WTC11 (cell line): ENCODE measurements at regions of chr2 and their contacts with region 1.

Region 1: DNA sequence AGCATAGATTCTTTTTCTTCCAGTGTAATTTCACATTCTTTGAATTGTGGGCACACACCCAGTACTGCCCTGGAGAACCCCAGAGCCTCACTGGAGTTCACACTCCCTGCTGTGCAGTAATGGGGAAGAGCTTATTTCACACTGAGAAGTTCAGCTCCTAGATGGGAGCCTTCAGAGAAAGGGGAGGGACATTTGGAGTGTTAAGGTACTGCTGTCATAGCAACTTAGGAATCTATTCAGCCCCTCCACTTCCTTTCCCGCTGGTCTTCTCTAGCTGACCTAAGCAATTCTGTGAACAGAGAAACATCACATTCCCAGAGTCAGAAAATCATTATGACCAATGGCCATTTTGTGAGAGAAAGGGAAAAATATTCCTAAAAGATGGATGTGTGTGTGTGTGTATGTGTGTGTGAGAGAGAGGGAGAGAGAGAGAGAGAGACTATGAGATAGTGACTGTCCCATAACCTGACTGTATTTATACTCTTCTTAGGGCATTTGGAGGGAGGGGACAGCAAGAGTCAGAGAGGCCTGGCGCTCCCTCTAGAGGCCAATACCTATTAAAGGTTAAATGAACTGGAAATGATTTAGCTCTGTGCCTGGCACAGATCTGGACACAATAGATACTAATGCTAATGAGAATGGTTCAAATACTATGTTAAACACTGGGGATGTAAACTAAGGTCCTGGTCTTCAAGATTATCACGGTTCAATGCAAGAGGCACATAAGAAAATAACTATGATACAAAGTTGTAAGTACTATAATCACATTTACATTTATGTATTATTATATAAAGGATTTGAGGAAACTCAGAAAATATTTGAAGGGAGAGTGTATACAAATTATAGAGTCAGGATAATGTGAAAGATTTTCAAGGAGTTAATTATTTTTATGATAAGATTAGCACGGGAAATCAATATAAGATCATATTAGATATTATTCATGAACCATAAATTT is 41.5 kb upstream of the RPE start:
- DNase-seq: peak; percentile 44
- ATAC-seq: peak; percentile 97
- H3K4me3 Mint-ChIP-seq: peak overlapping the region; percentile 0
- H3K27ac Mint-ChIP-seq: no peak overlapping the region
- H3K4me1 Mint-ChIP-seq: peaks cover 23% of the 10 kb centered on the region
- H3K27me3 Mint-ChIP-seq: peaks cover 75% of the 10 kb centered on the region
- CTCF ChIP-seq: peak; percentile 57

Region 2: DNA sequence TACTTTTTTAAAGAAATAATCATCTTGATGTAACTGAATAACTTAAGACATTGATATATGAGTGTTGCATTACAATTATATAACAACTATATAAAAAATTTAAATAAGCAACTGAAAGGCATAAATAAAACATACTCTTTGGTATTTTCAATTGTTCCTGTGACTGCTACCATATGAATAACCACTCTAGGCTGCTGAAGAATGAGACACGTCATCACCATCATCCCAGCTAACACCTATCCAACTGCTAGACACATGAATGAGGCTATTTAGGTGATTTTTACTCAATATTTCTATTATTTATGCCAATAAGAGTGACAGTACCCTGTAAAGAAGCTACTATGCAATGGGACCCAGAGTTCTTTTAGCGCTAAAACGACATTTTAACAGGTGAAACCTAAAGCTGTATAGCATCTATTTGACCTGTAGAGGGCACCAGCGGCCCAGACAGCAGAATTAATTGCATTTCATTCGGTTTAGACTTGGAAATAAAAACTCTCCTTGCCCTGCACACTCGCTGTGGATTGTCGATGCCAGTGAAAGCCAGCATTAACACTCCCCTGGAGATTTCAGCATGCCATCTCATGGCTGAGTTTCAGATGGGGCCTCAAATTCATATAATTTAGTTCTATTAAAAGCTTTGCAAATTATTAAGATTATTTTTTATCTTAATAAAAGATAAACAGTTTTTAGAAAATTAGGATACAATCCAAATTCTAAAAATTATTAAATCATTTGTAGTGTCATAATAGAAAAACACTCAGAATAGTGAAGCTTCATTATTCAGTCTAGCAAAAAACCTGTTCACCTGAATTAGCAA is 626.5 kb before region 1 on chr2:
- CTCF ChIA-PET with region 1: interaction called, 10 read pairs
- POLR2A ChIA-PET with region 1: no interaction called
- DNase-seq: peak; percentile 57
- ATAC-seq: peak; percentile 76
- H3K4me3 Mint-ChIP-seq: no peak overlapping the region
- H3K27ac Mint-ChIP-seq: no peak overlapping the region
- H3K4me1 Mint-ChIP-seq: peaks cover 13% of the 10 kb centered on the region
- H3K27me3 Mint-ChIP-seq: peaks cover 9% of the 10 kb centered on the region
- CTCF ChIP-seq: peak; percentile 73

Region 3: GRCh38 chr2:209451209-209451834 is 509.6 kb before region 1 on chr2:
- CTCF ChIA-PET with region 1: interaction called, 11 read pairs
- POLR2A ChIA-PET with region 1: no interaction called
- DNase-seq: peak; percentile 17
- ATAC-seq: peak; percentile 97
- H3K4me3 Mint-ChIP-seq: no peak overlapping the region
- H3K27ac Mint-ChIP-seq: peak overlapping the region; percentile 80
- H3K4me1 Mint-ChIP-seq: peaks cover 25% of the 10 kb centered on the region
- H3K27me3 Mint-ChIP-seq: peaks cover 10% of the 10 kb centered on the region
- CTCF ChIP-seq: no peak

Region 4: DNA sequence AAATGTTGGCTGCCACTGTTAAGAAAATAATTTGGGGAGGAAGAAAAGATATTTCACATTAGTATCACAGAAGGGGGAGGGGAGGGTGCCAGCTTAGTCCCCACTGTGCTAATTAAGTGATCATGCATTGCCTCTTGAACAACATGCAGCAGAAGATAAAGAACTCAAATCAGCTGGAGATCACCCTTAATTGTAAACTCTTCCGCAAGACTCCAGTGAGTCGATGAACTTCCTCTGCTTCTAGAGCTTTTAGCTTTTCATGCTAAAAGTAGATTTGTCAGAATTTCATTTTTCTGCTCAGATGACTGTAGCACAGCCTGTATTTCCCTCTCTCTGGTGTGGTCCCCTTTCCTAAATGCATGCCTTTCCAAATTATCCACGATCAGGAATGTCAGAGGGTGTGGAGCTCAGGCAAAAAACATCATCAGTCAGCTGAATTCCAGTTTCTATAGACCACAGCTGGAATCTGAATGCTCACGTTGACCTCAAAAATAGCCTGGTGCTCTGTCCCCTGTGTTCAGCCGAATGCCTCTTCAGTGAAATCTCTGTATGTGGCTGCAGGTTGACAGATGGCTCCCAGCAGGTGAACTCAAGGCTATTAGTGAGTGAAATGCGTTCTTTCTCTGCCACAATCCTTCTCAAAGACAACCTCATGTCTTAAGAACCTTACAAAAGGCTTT is 346.1 kb before region 1 on chr2:
- CTCF ChIA-PET with region 1: interaction called, 14 read pairs
- POLR2A ChIA-PET with region 1: no interaction called
- DNase-seq: peak; percentile 31
- ATAC-seq: peak; percentile 83
- H3K4me3 Mint-ChIP-seq: peak overlapping the region; percentile 56
- H3K27ac Mint-ChIP-seq: peak overlapping the region; percentile 80
- H3K4me1 Mint-ChIP-seq: peaks cover 46% of the 10 kb centered on the region
- H3K27me3 Mint-ChIP-seq: peaks cover 24% of the 10 kb centered on the region
- CTCF ChIP-seq: no peak

Region 5: DNA sequence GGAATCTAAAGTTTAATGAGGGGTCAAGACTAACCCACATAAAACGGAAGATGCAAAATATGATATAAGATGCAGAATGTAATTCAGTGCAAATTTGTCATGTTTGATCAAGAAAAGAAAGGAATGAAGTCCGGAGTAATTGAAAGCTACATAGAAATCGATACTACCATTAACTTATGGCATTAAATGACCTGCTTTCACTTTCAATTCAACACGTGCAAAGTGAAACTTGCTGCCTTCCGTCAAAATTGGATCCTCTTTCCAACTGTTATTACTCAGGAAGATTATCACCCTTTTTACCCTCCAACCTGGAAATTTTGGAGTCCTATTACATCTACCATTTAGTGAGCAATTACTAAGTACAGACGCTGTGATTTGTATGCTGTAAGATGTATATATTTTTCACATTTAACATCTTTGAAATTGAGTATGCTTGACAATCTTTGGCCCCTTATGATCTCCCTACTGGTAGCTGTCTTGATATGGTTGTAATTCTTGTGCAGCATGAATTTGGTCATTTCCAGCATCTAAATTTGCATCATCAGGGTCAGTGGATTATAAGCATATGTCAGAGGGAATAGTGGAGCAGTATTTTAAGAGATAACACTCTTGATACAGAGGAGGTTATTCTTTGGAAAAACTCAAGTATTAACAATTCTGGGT is 170.8 kb before region 1 on chr2:
- CTCF ChIA-PET with region 1: interaction called, 22 read pairs
- POLR2A ChIA-PET with region 1: interaction called, 3 read pairs
- DNase-seq: no peak
- ATAC-seq: no peak
- H3K4me3 Mint-ChIP-seq: no peak overlapping the region
- H3K27ac Mint-ChIP-seq: no peak overlapping the region
- H3K4me1 Mint-ChIP-seq: peaks cover 16% of the 10 kb centered on the region
- H3K27me3 Mint-ChIP-seq: peaks cover 8% of the 10 kb centered on the region
- CTCF ChIP-seq: no peak

Region 6: DNA sequence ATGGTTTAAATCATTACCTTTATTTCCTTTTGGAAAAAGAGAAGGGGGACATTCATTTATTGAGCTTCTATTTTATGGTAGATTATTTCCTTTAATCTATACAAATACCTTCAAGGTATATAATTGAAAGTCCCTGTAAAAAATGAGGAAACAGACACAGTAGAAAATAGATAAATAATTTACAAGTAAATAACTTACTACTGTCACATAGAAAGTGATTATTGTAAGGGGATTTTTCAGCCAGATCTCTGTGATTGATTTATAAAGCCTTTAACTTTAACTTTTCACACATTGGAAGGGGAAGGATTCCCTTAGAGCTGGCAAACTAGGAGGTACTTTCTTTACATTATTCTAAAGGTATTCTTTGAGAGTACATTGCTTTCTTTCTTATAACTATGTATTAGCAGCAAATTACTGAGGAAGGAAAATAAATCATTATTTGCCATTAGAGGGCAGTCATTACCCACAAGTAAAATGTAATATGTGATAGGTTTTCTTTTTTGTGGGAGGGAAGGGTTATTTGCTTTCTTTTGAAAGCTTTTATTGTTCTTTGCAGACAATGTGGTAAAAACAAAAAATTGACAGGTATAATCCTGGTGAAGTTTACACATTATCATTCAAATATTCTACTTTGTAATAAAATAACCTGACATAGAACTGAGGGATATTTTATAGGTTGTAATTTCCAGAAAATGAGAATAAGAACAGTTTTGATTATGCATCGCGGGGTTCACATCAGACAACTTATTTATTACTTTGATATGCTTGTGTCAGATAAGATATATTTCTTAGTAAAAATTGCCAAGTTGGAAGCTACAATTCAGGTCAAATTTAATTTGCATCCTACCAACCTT is 16.7 kb after region 1 on chr2:
- CTCF ChIA-PET with region 1: interaction called, 17 read pairs
- POLR2A ChIA-PET with region 1: no interaction called
- DNase-seq: no peak
- ATAC-seq: no peak
- H3K4me3 Mint-ChIP-seq: no peak overlapping the region
- H3K27ac Mint-ChIP-seq: no peak overlapping the region
- H3K4me1 Mint-ChIP-seq: no peaks in the 10 kb centered on the region
- H3K27me3 Mint-ChIP-seq: 0 out of 2 replicates have a peak, but pooled peaks cover 4% of the 10 kb centered on the region
- CTCF ChIP-seq: 0 out of 2 replicates have a peak, but pooled peaks have one; percentile 13